ENCODE measurements at regions of chr17 and their contacts with region 1.

Region 1: GRCh38 chr17:30124273-30124796 is 7.7 kb downstream of the NSRP1 start:
- DNase-seq: no peak
- ATAC-seq: no peak
- H3K4me3 ChIP-seq: no peak overlapping the region
- H3K27ac ChIP-seq: no peak overlapping the region
- H3K4me1 ChIP-seq: no peaks in the 10 kb centered on the region
- H3K27me3 ChIP-seq: no peaks in the 10 kb centered on the region

Region 2: GRCh38 chr17:30256756-30257506 is 132.6 kb after region 1 on chr17:
- intact Hi-C with region 1: no loop called
- DNase-seq: no peak
- ATAC-seq: no peak
- H3K4me3 ChIP-seq: no peak overlapping the region
- H3K27ac ChIP-seq: no peak overlapping the region
- H3K4me1 ChIP-seq: peaks cover 2 to 3% of the 10 kb centered on the region in 2 donors
- H3K27me3 ChIP-seq: no peaks in the 10 kb centered on the region

Region 3: GRCh38 chr17:30336369-30337171 is 212.2 kb after region 1 on chr17:
- intact Hi-C with region 1: loop called in 1 of 2 experiments (anchors 5 kb)
- DNase-seq: no peak
- ATAC-seq: no peak
- H3K4me3 ChIP-seq: no peak overlapping the region
- H3K27ac ChIP-seq: no peak overlapping the region
- H3K4me1 ChIP-seq: no peaks in the 10 kb centered on the region
- H3K27me3 ChIP-seq: no peaks in the 10 kb centered on the region

Measured in aorta (tissue), 5 donors.